ENCODE measurements at regions of chr7 and their contacts with region 1.

Region 1: GRCh38 chr7:122550545-122550944 is 148.4 kb downstream of the RNF133 start:
- DNase-seq: no peak
- H3K4me3 ChIP-seq: no peak overlapping the region
- H3K4me3 Mint-ChIP-seq: no peak overlapping the region
- H3K27ac Mint-ChIP-seq: no peak overlapping the region
- H3K4me1 ChIP-seq: no peaks in the 10 kb centered on the region
- H3K4me1 Mint-ChIP-seq: no peaks in the 10 kb centered on the region
- H3K27me3 ChIP-seq: no peaks in the 10 kb centered on the region
- H3K27me3 Mint-ChIP-seq: no peaks in the 10 kb centered on the region
- CTCF ChIP-seq: peak; percentile 26 to 44

Region 2: DNA sequence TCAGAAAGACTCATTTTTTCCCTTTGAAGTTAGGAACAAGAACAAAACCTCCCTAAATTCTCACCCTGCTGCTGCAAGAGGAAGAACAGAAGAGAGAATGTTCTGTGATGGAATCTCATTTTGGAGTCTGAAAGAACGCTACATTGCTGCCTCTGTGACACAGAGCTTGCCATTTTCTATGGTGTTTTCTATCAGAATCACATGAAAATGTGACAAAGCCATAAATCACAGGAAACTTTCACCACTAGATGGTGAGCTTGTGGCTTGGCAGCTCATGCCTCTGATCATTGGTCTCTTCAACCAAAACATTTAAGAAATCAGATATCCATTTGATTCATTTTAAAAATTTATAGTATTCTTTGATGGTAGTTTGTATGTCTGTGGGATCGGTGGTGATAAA is 252.8 kb after region 1 on chr7:
- CTCF ChIA-PET with region 1: no interaction called
- POLR2A ChIA-PET with region 1: no interaction called
- intact Hi-C with region 1: loop called (anchors 2 kb)
- DNase-seq: no peak
- H3K4me3 ChIP-seq: no peak overlapping the region
- H3K4me3 Mint-ChIP-seq: no peak overlapping the region
- H3K27ac Mint-ChIP-seq: no peak overlapping the region
- H3K4me1 ChIP-seq: no peaks in the 10 kb centered on the region
- H3K4me1 Mint-ChIP-seq: no peaks in the 10 kb centered on the region
- H3K27me3 ChIP-seq: no peaks in the 10 kb centered on the region
- H3K27me3 Mint-ChIP-seq: no peaks in the 10 kb centered on the region
- CTCF ChIP-seq: peak; percentile 26 to 50

Region 3: GRCh38 chr7:122886357-122887081 is 336.0 kb after region 1 on chr7 and contains the start of gene CADPS2:
- CTCF ChIA-PET with region 1: no interaction called
- POLR2A ChIA-PET with region 1: no interaction called
- intact Hi-C with region 1: loop called (anchors 5 kb)
- DNase-seq: peak; percentile 71 to 74
- H3K4me3 ChIP-seq: peak within 1 kb of the TSS; percentile 54
- H3K4me3 Mint-ChIP-seq: peak within 1 kb of the TSS; percentile 77
- H3K27ac Mint-ChIP-seq: no peak within 1 kb of the TSS
- H3K4me1 ChIP-seq: no peaks in the 10 kb centered on the region
- H3K4me1 Mint-ChIP-seq: peaks cover 6% of the 10 kb centered on the region
- H3K27me3 ChIP-seq: peaks cover 4% of the 10 kb centered on the region; the same call in 1 of the 2 replicates
- H3K27me3 Mint-ChIP-seq: peaks cover 12% of the 10 kb centered on the region
- CTCF ChIP-seq: peak in 1 of 2 experiments; percentile 9
- total RNA-seq, gene CADPS2: 2.7 and 3.6 TPM in 2 replicates

Region 4: GRCh38 chr7:123070702-123071286 is 520.2 kb after region 1 on chr7:
- CTCF ChIA-PET with region 1: no interaction called
- POLR2A ChIA-PET with region 1: no interaction called
- intact Hi-C with region 1: loop called (anchors 2 kb)
- DNase-seq: peak in 1 of 2 experiments; percentile 40
- H3K4me3 ChIP-seq: no peak overlapping the region
- H3K4me3 Mint-ChIP-seq: no peak overlapping the region
- H3K27ac Mint-ChIP-seq: no peak overlapping the region
- H3K4me1 ChIP-seq: no peaks in the 10 kb centered on the region
- H3K4me1 Mint-ChIP-seq: no peaks in the 10 kb centered on the region
- H3K27me3 ChIP-seq: no peaks in the 10 kb centered on the region
- H3K27me3 Mint-ChIP-seq: no peaks in the 10 kb centered on the region
- CTCF ChIP-seq: peak; percentile 63 to 73